ENCODE measurements at regions of chr3 and their contacts with region 1.

Region 1: GRCh38 chr3:35965908-35966307 is 326.6 kb downstream of the ARPP21 start:
- DNase-seq: no peak
- ATAC-seq: peak in 1 of 2 donors; percentile 79
- H3K4me3 ChIP-seq: no peak overlapping the region
- H3K27ac ChIP-seq: no peak overlapping the region
- H3K4me1 ChIP-seq: no peaks in the 10 kb centered on the region
- H3K27me3 ChIP-seq: no peaks in the 10 kb centered on the region

Region 2: GRCh38 chr3:36013425-36013824 is 47.5 kb after region 1 on chr3:
- intact Hi-C with region 1: no loop called
- DNase-seq: no peak
- ATAC-seq: no peak
- H3K4me3 ChIP-seq: no peak overlapping the region
- H3K27ac ChIP-seq: no peak overlapping the region
- H3K4me1 ChIP-seq: no peaks in the 10 kb centered on the region
- H3K27me3 ChIP-seq: no peaks in the 10 kb centered on the region

Region 3: DNA sequence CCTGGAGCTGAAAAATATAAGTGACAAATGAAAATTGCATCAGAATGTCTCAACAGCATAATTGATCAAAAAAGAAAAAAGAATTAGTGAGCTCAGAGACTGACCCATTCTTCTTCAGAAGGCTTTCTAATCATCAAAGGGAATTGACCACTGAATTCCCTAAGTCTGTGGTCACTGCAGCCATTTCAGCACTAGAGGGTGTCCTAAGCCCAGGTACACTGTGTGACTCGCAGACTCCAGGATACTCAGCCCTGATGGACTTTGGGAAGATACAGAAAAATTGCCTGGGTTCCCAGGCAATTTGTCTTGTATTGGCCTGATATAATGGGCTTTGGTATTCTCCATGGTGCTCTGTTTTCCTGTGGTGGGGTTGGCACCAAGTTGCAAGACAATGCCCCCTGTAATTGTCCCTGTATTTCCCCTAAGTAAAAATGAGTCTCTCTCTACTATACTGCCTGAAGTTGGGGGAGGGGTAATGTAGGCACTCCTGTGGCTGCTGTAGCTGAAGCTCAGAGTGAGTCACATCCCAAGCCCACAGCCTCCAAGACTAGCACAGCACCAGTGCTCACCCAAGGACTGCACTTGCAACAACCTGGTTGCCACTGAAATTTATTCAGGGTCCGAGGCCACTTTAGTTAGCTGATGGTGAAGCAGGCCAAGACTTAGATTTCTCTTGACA is 158.3 kb after region 1 on chr3:
- intact Hi-C with region 1: no loop called
- DNase-seq: no peak
- ATAC-seq: no peak
- H3K4me3 ChIP-seq: no peak overlapping the region
- H3K27ac ChIP-seq: no peak overlapping the region
- H3K4me1 ChIP-seq: no peaks in the 10 kb centered on the region
- H3K27me3 ChIP-seq: no peaks in the 10 kb centered on the region

Region 4: GRCh38 chr3:36540888-36541518 is 575.1 kb after region 1 on chr3:
- intact Hi-C with region 1: loop called in 1 of 4 experiments (anchors 10 kb)
- DNase-seq: no peak
- ATAC-seq: no peak
- H3K4me3 ChIP-seq: no peak overlapping the region
- H3K27ac ChIP-seq: no peak overlapping the region
- H3K4me1 ChIP-seq: no peaks in the 10 kb centered on the region
- H3K27me3 ChIP-seq: no peaks in the 10 kb centered on the region

Region 5: GRCh38 chr3:36700537-36701248 is 734.8 kb after region 1 on chr3:
- intact Hi-C with region 1: loop called (anchors 2 to 5 kb)
- DNase-seq: peak; percentile 38 to 76 (median 72)
- ATAC-seq: peak; percentile 71 to 77
- H3K4me3 ChIP-seq: no peak overlapping the region
- H3K27ac ChIP-seq: no peak overlapping the region
- H3K4me1 ChIP-seq: no peaks in the 10 kb centered on the region
- H3K27me3 ChIP-seq: no peaks in the 10 kb centered on the region